ENCODE measurements at regions of chr6 and their contacts with region 1.

Region 1: DNA sequence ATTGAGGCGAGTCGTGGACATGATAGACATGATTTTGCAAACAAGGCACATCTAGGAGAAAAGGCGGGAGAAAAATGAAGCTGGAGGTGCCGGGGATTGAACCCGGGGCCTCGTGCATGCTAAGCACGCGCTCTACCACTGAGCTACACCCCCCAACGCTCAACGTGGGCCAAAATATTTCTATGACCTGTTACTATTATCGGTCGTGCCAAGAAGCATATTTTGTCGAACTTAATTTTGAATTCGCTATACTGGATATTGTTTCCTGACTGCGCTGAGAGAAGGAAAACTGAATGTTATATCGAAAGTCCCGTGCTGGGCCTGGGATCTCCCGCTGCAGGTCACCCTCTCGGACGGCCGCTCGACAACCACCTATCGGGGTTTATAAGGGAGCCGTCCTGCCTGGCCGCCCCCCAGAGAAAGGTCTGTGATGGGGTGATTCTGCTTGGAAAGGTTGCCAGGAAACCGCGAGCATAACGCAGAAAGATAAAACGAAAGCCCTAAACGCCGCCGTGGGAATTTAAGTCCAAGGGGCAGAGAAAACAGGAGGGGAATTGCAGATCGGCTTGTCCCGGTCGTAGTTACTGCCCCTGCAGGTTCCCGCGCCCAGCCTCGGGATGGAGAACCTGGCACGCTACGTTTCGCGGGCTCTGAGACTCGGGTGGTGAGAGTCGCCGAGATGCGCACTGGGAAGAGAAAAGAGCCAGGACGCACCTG is 60.0 kb downstream of the TRIM27 start:
- DNase-seq: peak; percentile 85
- H3K4me3 Mint-ChIP-seq: peak overlapping the region; percentile 81
- H3K27ac Mint-ChIP-seq: peak overlapping the region; percentile 76
- H3K4me1 Mint-ChIP-seq: peaks cover 46% of the 10 kb centered on the region
- H3K27me3 Mint-ChIP-seq: peaks cover 12% of the 10 kb centered on the region

Region 2: DNA sequence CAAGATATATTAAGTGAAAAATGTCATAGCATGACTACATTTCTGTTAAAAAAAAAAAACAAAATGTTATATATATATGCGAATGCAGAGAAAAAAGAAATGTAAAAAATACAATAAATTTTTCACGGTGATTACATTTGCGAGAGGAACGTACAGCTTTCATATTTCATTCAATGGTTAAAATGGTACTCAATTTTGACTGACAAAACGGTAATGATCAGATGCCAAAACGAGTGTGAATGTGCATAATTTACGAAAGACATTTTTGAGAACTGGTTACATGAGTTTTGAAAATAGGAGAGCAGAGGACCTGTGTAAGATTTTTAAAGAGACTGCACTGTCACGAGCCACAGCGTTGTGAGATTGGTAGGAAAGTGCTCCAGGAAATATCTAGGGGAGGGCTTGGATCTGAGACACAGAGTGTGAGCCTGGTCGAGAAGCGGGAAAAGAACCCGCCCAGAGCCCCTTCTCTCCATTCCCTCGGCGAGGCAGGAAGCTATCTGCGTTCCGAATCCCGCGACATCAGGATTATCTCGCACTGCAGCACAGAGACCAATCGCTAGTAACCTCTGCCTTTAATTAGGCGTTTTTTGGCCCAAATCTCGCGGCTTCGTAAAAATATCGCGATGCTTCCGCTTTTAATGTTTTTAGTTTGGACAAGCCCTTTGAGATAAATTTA is 31.5 kb after region 1 on chr6:
- CTCF ChIA-PET with region 1: interaction called, 16 read pairs
- POLR2A ChIA-PET with region 1: interaction called, 125 read pairs
- DNase-seq: peak; percentile 95
- H3K4me3 Mint-ChIP-seq: peak overlapping the region; percentile 89
- H3K27ac Mint-ChIP-seq: peak overlapping the region; percentile 99
- H3K4me1 Mint-ChIP-seq: peaks cover 20% of the 10 kb centered on the region
- H3K27me3 Mint-ChIP-seq: peaks cover 2% of the 10 kb centered on the region

Region 3: GRCh38 chr6:28910902-28911690 is 47.3 kb after region 1 on chr6:
- CTCF ChIA-PET with region 1: no interaction called
- POLR2A ChIA-PET with region 1: no interaction called
- DNase-seq: no peak
- H3K4me3 Mint-ChIP-seq: no peak overlapping the region
- H3K27ac Mint-ChIP-seq: no peak overlapping the region
- H3K4me1 Mint-ChIP-seq: no peaks in the 10 kb centered on the region
- H3K27me3 Mint-ChIP-seq: no peaks in the 10 kb centered on the region

Region 4: DNA sequence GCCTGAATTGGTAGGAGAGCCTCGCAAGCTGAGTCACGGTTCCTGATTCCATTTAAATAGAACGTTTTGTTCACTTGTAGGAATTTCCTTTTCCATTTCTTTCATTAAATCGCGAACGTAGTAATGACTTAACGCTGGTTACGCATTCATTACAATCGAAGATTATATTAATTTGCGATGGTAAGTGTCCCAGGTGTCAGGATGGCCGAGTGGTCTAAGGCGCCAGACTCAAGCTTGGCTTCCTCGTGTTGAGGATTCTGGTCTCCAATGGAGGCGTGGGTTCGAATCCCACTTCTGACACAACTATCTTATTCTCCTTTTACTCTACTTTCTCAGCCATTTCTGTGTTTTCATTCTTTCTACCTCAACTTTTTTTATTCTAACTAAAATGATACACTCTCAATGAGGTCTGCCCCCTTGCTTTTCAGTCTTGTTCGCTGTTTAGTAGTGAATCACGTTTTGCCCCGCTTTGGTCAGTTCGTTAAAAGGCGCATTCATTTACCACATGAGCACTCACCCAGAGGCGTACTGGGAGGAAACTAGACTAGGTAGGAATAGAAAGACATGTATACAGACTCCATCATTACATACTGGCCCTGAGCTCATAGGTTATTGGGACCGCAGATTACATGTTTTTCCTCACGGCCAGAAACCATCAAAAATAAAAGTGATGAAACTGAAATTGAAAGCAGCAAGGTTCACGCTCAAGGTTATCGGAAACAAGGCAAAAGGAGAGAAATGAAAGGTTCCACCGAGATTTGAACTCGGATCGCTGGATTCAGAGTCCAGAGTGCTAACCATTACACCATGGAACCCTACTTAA is 77.3 kb after region 1 on chr6:
- CTCF ChIA-PET with region 1: interaction called, 3 read pairs
- POLR2A ChIA-PET with region 1: interaction called, 16 read pairs
- DNase-seq: peak; percentile 78
- H3K4me3 Mint-ChIP-seq: peak overlapping the region; percentile 88
- H3K27ac Mint-ChIP-seq: peak overlapping the region; percentile 93
- H3K4me1 Mint-ChIP-seq: peaks cover 51% of the 10 kb centered on the region
- H3K27me3 Mint-ChIP-seq: no peaks in the 10 kb centered on the region

Region 5: GRCh38 chr6:29005183-29005885 is 141.6 kb after region 1 on chr6 and contains the start of gene ZNF311:
- CTCF ChIA-PET with region 1: no interaction called
- POLR2A ChIA-PET with region 1: no interaction called
- DNase-seq: peak; percentile 61
- H3K4me3 Mint-ChIP-seq: peak within 1 kb of the TSS; percentile 80
- H3K27ac Mint-ChIP-seq: peak within 1 kb of the TSS; percentile 84
- H3K4me1 Mint-ChIP-seq: peaks cover 27% of the 10 kb centered on the region
- H3K27me3 Mint-ChIP-seq: peaks cover 5% of the 10 kb centered on the region
- total RNA-seq, gene ZNF311: 0.53 to 0.65 TPM

Region 6: GRCh38 chr6:29171736-29172135 is 308.0 kb after region 1 on chr6:
- CTCF ChIA-PET with region 1: no interaction called
- POLR2A ChIA-PET with region 1: no interaction called
- DNase-seq: no peak
- H3K4me3 Mint-ChIP-seq: no peak overlapping the region
- H3K27ac Mint-ChIP-seq: no peak overlapping the region
- H3K4me1 Mint-ChIP-seq: no peaks in the 10 kb centered on the region
- H3K27me3 Mint-ChIP-seq: peaks cover 3% of the 10 kb centered on the region